CD8-positive, alpha-beta T cell (primary cell): ENCODE measurements at regions of chr1 and their contacts with region 1.

Region 1: GRCh38 chr1:173420330-173420806 is 56.8 kb upstream of the PRDX6 start:
- DNase-seq: peak; percentile 23 to 83 (median 52)
- ATAC-seq: peak; percentile 96
- H3K4me3 ChIP-seq: no peak overlapping the region
- H3K4me3 Mint-ChIP-seq: no peak overlapping the region
- H3K27ac ChIP-seq: no peak overlapping the region
- H3K27ac Mint-ChIP-seq: no peak overlapping the region
- H3K4me1 ChIP-seq: peaks cover 8% of the 10 kb centered on the region
- H3K4me1 Mint-ChIP-seq: peaks cover 7% of the 10 kb centered on the region
- H3K27me3 ChIP-seq: no peaks in the 10 kb centered on the region
- H3K27me3 Mint-ChIP-seq: no peaks in the 10 kb centered on the region
- CTCF ChIP-seq: peak; percentile 88

Region 2: DNA sequence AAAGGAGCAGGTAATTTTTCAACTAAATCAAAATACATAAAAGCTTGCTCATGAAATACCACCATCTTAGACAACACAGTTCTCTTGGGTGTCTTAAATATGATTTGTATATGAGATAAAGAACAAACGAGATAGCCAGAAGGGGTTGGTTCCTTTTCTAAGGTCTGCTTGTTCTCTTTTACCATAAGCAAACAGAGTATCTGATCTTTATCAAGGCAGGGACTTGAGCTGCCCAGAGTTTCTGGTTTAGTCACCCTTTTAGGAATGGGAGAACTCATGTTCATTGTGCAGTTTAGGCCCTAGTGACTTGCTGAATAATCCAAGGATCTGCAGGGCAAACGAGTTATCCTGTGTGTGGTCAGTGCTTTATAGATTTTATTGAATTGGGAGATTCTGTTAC is 890.4 kb before region 1 on chr1:
- CTCF ChIA-PET with region 1: no interaction called
- POLR2A ChIA-PET with region 1: no interaction called
- intact Hi-C with region 1: no loop called
- DNase-seq: no peak
- ATAC-seq: no peak
- H3K4me3 ChIP-seq: no peak overlapping the region
- H3K4me3 Mint-ChIP-seq: no peak overlapping the region
- H3K27ac ChIP-seq: no peak overlapping the region
- H3K27ac Mint-ChIP-seq: no peak overlapping the region
- H3K4me1 ChIP-seq: peaks cover 18% of the 10 kb centered on the region
- H3K4me1 Mint-ChIP-seq: peaks cover 25% of the 10 kb centered on the region
- H3K27me3 ChIP-seq: no peaks in the 10 kb centered on the region
- H3K27me3 Mint-ChIP-seq: peaks cover 3% of the 10 kb centered on the region
- CTCF ChIP-seq: no peak

Region 3: GRCh38 chr1:174074757-174075156 is 654.4 kb after region 1 on chr1:
- CTCF ChIA-PET with region 1: no interaction called
- POLR2A ChIA-PET with region 1: no interaction called
- intact Hi-C with region 1: loop called in 1 of 2 experiments (anchors 5 kb)
- DNase-seq: peak in 2 of 9 experiments; percentile 8 to 26
- ATAC-seq: no peak
- H3K4me3 ChIP-seq: no peak overlapping the region
- H3K4me3 Mint-ChIP-seq: no peak overlapping the region
- H3K27ac ChIP-seq: no peak overlapping the region
- H3K27ac Mint-ChIP-seq: no peak overlapping the region
- H3K4me1 ChIP-seq: no peaks in the 10 kb centered on the region
- H3K4me1 Mint-ChIP-seq: no peaks in the 10 kb centered on the region
- H3K27me3 ChIP-seq: no peaks in the 10 kb centered on the region
- H3K27me3 Mint-ChIP-seq: peaks cover 2% of the 10 kb centered on the region
- CTCF ChIP-seq: peak; percentile 22

Region 4: DNA sequence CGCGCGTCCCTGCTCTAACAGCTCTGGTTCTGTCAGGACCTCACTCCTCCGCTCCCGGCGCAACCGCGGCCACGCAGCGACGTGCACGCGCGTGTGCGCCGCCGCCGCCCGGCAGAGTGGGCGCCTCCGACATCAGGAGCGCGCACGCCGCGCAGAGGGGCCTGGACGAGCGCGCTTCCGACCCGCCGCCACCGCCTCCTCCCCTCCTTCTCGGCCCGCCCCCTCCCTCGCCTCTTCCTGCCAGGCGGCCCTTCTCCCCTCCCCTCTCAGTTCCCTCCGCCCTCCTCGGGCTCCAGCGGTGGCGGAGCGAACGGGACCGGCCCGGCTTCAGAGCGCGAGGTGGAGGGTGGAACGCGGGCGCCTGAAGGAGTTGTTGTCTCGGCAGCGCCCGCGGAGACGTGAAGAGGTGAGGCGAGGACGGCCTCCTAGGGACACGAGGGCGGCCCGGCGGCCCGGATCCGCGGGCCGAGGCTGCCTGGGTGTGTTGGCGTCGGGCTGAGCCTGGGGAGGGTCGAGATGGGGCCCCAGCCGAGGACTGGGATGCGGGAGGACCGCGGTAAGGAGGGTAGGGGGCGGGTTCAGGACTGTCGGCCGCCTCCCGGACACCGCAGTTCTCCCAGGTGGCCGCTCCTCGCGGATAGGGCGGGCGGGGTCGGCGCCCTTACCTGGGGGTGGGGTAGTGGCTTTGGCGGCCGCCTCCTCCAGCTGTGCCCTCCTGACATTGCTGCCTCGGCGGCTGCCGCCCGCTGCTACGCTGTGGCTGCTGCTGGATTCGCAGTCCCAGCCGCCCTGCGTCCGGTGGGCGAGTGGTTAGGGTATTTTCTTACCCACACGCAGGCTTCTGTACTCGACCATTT is 739.1 kb after region 1 on chr1 and contains the start of gene RABGAP1L:
- CTCF ChIA-PET with region 1: no interaction called
- POLR2A ChIA-PET with region 1: no interaction called
- intact Hi-C with region 1: loop called in 1 of 2 experiments (anchors 5 kb)
- DNase-seq: peak; percentile 90 to 98 (median 93)
- ATAC-seq: peak; percentile 90
- H3K4me3 ChIP-seq: peak within 1 kb of the TSS; percentile 73 to 74
- H3K4me3 Mint-ChIP-seq: peak within 1 kb of the TSS; percentile 91
- H3K27ac ChIP-seq: peak within 1 kb of the TSS; percentile 73 to 93
- H3K27ac Mint-ChIP-seq: peak within 1 kb of the TSS; percentile 96
- H3K4me1 ChIP-seq: peaks cover 16% of the 10 kb centered on the region
- H3K4me1 Mint-ChIP-seq: peaks cover 53% of the 10 kb centered on the region
- H3K27me3 ChIP-seq: no peaks in the 10 kb centered on the region
- H3K27me3 Mint-ChIP-seq: no peaks in the 10 kb centered on the region
- CTCF ChIP-seq: no peak
- total RNA-seq, gene RABGAP1L: 60.7 to 65.1 TPM

Region 5: DNA sequence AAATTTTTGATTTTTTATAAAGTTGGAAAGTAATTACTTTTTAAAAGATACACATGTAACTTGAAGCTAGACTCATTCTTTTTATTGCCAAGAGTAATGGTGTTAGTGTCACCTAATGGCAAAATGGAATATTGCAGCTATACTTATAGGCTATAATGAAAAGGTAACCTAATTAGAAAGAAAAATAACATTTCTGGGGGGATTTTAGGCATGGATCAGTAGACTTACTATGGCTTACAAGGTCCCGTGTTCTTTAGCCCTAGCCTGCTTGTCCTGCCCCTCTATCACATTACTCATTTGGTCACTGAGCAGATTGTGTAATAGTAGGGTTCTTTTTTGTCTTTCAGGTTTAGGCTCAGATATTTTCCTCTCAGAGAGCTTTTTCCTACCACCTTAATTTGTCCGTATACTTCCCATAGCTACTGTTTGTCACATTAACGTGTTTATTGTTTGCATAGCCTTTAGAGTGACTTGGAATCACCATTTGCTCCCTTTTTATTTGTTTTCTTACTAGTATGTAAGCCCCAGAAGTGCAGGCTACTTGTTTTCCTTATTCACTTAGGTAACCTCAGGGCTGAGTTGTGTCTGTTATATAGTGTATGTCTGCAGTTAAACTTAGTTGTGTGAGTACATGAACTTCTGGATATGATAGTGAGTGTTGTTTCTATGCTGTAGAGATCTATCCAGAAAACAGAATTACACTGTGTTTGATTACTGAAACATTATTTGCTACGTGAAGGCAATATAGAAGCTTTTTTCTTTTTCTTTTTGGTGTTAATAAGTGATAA is 797.6 kb after region 1 on chr1:
- CTCF ChIA-PET with region 1: no interaction called
- POLR2A ChIA-PET with region 1: no interaction called
- intact Hi-C with region 1: loop called (anchors 1 to 2 kb)
- DNase-seq: peak in 2 of 9 experiments; percentile 58 to 70
- ATAC-seq: peak; percentile 75
- H3K4me3 ChIP-seq: no peak overlapping the region
- H3K4me3 Mint-ChIP-seq: no peak overlapping the region
- H3K27ac ChIP-seq: no peak overlapping the region
- H3K27ac Mint-ChIP-seq: no peak overlapping the region
- H3K4me1 ChIP-seq: no peaks in the 10 kb centered on the region
- H3K4me1 Mint-ChIP-seq: peaks cover 3% of the 10 kb centered on the region
- H3K27me3 ChIP-seq: no peaks in the 10 kb centered on the region
- H3K27me3 Mint-ChIP-seq: no peaks in the 10 kb centered on the region
- CTCF ChIP-seq: peak; percentile 92

Region 6: DNA sequence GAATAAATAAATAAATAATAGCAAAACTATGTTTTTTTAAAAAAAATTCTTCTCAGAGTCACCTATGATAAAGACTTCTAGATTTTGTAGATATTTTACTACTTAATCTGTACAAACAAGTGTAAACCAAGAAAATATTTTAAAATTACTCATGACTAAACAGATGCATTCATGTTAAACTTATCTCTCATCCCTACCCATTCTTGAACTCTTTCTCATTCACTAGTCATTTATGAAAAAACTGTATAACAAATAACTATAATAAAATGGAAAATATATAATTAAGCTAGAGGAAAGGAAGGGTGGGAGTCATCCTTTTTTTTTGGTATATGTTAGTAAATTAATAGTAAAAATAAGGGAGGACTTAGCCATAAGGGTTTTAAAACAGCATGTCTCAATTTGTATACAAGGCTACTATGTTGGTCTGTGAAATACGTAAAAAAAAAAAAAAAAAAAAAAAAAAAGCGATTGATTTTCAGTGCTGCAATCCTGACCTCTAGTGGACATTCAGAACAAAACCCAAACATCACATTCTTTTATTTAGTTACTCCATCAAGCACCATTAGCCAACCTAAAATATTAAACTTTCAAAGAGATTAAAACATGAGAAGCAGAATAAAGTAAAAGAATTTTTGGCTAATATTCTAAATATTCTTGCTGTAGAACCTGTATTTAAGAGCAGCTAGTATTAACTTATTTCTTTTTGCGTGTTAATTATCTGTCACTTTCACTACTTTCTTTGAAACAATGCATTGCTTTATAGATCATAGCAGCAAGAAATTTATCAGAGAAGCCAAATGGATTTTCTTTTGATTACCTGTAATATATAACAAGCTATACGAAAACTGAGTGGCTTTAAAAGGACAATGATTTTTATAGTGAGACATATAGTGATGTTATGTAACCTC is 1323.5 kb after region 1 on chr1:
- CTCF ChIA-PET with region 1: no interaction called
- POLR2A ChIA-PET with region 1: no interaction called
- intact Hi-C with region 1: loop called (anchors 1 to 2 kb)
- DNase-seq: peak in 2 of 9 experiments; percentile 64 to 74
- ATAC-seq: peak; percentile 29
- H3K4me3 ChIP-seq: no peak overlapping the region
- H3K4me3 Mint-ChIP-seq: no peak overlapping the region
- H3K27ac ChIP-seq: no peak overlapping the region
- H3K27ac Mint-ChIP-seq: no peak overlapping the region
- H3K4me1 ChIP-seq: no peaks in the 10 kb centered on the region
- H3K4me1 Mint-ChIP-seq: peaks cover 9% of the 10 kb centered on the region
- H3K27me3 ChIP-seq: no peaks in the 10 kb centered on the region
- H3K27me3 Mint-ChIP-seq: no peaks in the 10 kb centered on the region
- CTCF ChIP-seq: peak; percentile 66